OCI-LY7 (cell line): ENCODE measurements at regions of chr10 and their contacts with region 1.

Region 1: GRCh38 chr10:50624866-50625692 is 1.3 kb upstream of the SGMS1 start:
- DNase-seq: peak; percentile 88
- H3K4me3 ChIP-seq: peak overlapping the region; percentile 88
- H3K27ac ChIP-seq: peak overlapping the region; percentile 96
- H3K4me1 ChIP-seq: peaks cover 32% of the 10 kb centered on the region
- CTCF ChIP-seq: peak; percentile 72

Region 2: GRCh38 chr10:50362547-50363125 is 262.4 kb before region 1 on chr10:
- CTCF ChIA-PET with region 1: interaction called, 4 read pairs
- POLR2A ChIA-PET with region 1: interaction called, 36 read pairs
- intact Hi-C with region 1: loop called (anchors 2 kb)
- DNase-seq: peak; percentile 90
- H3K4me3 ChIP-seq: peak overlapping the region; percentile 72
- H3K27ac ChIP-seq: peak overlapping the region; percentile 100
- H3K4me1 ChIP-seq: peaks cover 68% of the 10 kb centered on the region
- CTCF ChIP-seq: no peak

Region 3: GRCh38 chr10:50375051-50375452 is 250.0 kb before region 1 on chr10:
- CTCF ChIA-PET with region 1: no interaction called
- POLR2A ChIA-PET with region 1: no interaction called
- intact Hi-C with region 1: no loop called
- DNase-seq: no peak
- H3K4me3 ChIP-seq: no peak overlapping the region
- H3K27ac ChIP-seq: no peak overlapping the region
- H3K4me1 ChIP-seq: peaks cover 13% of the 10 kb centered on the region
- CTCF ChIP-seq: no peak

Region 4: DNA sequence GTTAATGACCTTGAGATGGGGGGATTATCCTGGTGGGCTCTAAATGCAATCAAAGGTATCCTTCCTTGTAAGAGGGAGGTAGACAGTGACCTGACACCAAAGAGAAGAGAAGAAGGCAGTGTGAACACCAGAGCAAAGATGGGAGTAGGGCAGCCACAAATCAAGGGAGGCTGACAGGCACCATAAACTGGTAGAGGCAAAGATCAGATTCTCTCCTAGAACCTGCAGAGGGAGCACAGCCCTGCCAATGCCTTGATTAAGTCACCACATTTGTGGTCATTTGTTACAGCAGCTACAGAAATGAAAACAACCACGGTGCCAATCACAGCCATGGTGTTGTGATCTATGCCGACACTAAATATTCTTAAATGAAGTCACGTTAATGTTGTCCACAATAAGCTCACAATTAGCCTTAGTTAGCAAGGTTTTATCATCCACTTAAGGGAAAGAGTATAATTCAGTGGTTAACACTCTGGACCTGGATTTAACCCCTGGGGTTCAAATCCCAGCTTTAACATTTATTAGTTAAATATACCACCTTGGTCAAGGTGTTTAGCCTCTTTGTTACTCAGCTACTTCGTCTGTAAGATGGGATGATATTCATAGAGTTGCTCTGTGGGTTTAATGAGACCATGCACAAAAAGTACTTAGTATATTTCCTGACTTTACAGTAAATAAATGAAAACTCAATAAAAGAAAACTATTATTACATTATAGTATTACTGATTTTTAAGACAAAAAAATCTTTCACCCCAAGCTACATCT is 72.1 kb before region 1 on chr10:
- CTCF ChIA-PET with region 1: no interaction called
- POLR2A ChIA-PET with region 1: interaction called, 24 read pairs
- intact Hi-C with region 1: no loop called
- DNase-seq: peak; percentile 27
- H3K4me3 ChIP-seq: no peak overlapping the region
- H3K27ac ChIP-seq: no peak overlapping the region
- H3K4me1 ChIP-seq: peaks cover 16% of the 10 kb centered on the region
- CTCF ChIP-seq: peak; percentile 60

Region 5: DNA sequence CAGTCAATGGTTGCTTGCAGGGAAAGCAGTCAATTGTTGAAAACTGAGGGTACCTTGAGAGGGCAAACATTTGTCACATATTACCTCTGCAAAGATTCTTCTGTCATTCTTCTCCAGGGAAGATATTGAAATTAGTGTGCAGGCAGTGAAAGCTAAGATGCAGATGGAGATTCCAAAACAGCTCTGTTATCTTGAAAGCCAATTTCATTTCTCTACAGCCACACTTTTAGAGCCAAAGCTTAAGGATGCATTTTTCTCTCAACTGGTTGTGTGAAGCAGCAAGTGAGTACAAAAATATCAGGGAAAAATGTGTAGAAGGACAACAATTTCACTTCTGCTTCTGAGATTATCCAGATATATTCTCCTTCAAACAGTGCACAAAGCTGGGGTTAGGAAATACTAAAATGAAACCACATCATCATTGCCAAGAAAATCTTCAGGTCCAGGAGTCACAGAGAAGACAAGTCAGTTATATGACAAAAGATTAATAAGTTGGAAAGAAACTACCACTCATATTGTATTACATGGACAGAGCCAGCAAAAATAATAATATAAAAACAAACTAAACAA is 17.6 kb before region 1 on chr10:
- CTCF ChIA-PET with region 1: interaction called, 4 read pairs
- POLR2A ChIA-PET with region 1: interaction called, 11 read pairs
- intact Hi-C with region 1: no loop called
- DNase-seq: no peak
- H3K4me3 ChIP-seq: no peak overlapping the region
- H3K27ac ChIP-seq: no peak overlapping the region
- H3K4me1 ChIP-seq: peaks cover 53% of the 10 kb centered on the region
- CTCF ChIP-seq: no peak

Region 6: DNA sequence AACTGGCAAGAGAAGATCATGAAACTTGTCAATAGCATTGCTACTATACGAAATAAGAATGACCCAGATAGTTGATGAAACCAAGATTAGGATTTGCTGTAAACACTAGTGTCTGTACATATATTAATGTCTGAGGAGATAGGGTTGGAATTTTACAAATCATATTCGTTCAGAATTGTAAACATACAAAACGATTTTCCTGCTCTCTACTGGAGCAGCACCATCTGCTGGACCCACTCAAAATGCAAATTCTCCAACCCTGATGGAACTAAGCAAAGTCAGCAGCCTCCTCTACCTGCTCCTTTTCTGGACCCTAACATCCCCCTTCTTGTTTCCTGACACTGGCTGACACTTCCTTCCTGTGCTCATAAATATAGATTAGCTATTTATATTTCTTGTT is 28.1 kb after region 1 on chr10:
- CTCF ChIA-PET with region 1: interaction called, 9 read pairs
- POLR2A ChIA-PET with region 1: interaction called, 213 read pairs
- intact Hi-C with region 1: loop called (anchors 1 kb)
- DNase-seq: peak; percentile 70
- H3K4me3 ChIP-seq: peak overlapping the region; percentile 51
- H3K27ac ChIP-seq: peak overlapping the region; percentile 84
- H3K4me1 ChIP-seq: peaks cover 74% of the 10 kb centered on the region
- CTCF ChIP-seq: peak; percentile 78